ENCODE measurements at regions of chr1 and their contacts with region 1.

Region 1: DNA sequence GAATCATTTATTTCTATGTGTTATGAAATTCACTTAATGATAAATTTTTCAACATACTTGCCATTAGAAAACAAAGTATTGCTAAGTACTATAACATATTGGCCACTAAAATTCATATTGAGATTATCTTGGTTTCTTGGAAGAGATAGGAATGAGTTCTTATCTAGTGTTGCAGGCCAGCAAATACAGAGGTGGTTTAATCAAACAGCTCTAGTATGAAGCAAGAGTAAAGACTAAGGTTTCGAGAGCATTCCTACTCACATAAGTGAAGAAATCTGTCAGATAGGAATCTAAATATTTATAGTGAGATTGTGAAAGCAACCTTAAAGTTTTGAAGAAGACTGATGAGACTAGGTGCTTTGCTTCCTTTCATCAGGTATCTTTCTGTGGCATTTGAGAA is 37.9 kb upstream of the FOXE3 start:
- DNase-seq: peak in 1 of 2 experiments; percentile 50
- H3K4me3 ChIP-seq: no peak overlapping the region
- H3K4me3 Mint-ChIP-seq: peak overlapping the region; percentile 29
- H3K27ac Mint-ChIP-seq: no peak overlapping the region
- H3K4me1 ChIP-seq: peaks cover 49% of the 10 kb centered on the region
- H3K4me1 Mint-ChIP-seq: peaks cover 10% of the 10 kb centered on the region
- H3K27me3 ChIP-seq: no peaks in the 10 kb centered on the region
- H3K27me3 Mint-ChIP-seq: no peaks in the 10 kb centered on the region
- CTCF ChIP-seq: no peak

Region 2: DNA sequence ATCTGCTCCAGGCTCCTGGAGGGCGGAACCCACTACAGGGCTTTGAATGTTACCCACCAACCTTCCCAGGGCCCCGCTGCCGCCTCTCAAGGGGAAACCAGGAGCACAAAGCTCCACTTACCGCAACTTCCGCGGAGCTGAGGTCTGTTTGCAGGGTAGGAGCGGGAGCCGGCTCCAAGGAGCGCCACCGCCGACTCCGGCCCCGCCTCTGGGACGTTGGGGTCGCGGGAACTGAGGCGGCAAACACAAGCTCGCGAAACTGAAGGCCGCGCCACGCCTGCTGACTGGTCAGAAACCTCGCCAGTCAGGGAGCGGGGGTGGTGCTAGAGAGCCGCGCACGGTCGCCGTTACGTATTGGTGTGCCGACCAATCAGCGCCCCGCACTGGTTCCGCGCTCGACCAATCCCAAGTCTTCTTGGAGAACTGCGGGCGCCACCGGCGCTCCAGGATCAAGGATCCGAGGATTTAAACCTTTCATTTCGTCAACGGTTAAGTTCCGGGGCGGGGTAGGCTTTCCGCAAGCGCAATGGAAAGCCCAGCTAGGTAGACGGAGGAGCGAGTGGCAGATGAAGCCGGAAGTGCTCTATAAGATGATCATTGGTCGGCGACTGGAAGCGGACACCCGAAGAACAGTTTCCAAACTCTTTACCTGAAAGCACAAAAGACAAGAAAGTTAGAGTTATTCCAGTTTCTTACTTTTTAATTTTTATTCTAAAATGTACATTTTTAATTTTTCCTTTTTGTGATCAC is 64.1 kb before region 1 on chr1 and contains the start of gene STIL:
- CTCF ChIA-PET with region 1: no interaction called
- POLR2A ChIA-PET with region 1: no interaction called
- intact Hi-C with region 1: loop called (anchors 5 kb)
- DNase-seq: peak; percentile 97 to 99
- H3K4me3 ChIP-seq: peak within 1 kb of the TSS; percentile 61
- H3K4me3 Mint-ChIP-seq: peak within 1 kb of the TSS; percentile 92
- H3K27ac Mint-ChIP-seq: peak within 1 kb of the TSS; percentile 99
- H3K4me1 ChIP-seq: no peaks in the 10 kb centered on the region
- H3K4me1 Mint-ChIP-seq: no peaks in the 10 kb centered on the region
- H3K27me3 ChIP-seq: no peaks in the 10 kb centered on the region
- H3K27me3 Mint-ChIP-seq: no peaks in the 10 kb centered on the region
- CTCF ChIP-seq: no peak
- total RNA-seq, gene STIL: 25.9 and 26.4 TPM in 2 replicates

Region 3: GRCh38 chr1:47437447-47438164 is 59.5 kb after region 1 on chr1 and contains the start of gene FOXD2:
- CTCF ChIA-PET with region 1: no interaction called
- POLR2A ChIA-PET with region 1: no interaction called
- intact Hi-C with region 1: no loop called
- DNase-seq: peak; percentile 93 to 96
- H3K4me3 ChIP-seq: peak within 1 kb of the TSS; percentile 78
- H3K4me3 Mint-ChIP-seq: peak within 1 kb of the TSS; percentile 84
- H3K27ac Mint-ChIP-seq: peak within 1 kb of the TSS; percentile 49
- H3K4me1 ChIP-seq: no peaks in the 10 kb centered on the region
- H3K4me1 Mint-ChIP-seq: no peaks in the 10 kb centered on the region
- H3K27me3 ChIP-seq: no peaks in the 10 kb centered on the region
- H3K27me3 Mint-ChIP-seq: no peaks in the 10 kb centered on the region
- CTCF ChIP-seq: peak; percentile 50 to 95
- total RNA-seq, gene FOXD2: 4.4 and 4.6 TPM in 2 replicates

Measured in Caco-2 (cell line).